Naive thymus-derived CD4-positive, alpha-beta T cell (primary cell): ENCODE measurements at regions of chr4 and their contacts with region 1.

Region 1: DNA sequence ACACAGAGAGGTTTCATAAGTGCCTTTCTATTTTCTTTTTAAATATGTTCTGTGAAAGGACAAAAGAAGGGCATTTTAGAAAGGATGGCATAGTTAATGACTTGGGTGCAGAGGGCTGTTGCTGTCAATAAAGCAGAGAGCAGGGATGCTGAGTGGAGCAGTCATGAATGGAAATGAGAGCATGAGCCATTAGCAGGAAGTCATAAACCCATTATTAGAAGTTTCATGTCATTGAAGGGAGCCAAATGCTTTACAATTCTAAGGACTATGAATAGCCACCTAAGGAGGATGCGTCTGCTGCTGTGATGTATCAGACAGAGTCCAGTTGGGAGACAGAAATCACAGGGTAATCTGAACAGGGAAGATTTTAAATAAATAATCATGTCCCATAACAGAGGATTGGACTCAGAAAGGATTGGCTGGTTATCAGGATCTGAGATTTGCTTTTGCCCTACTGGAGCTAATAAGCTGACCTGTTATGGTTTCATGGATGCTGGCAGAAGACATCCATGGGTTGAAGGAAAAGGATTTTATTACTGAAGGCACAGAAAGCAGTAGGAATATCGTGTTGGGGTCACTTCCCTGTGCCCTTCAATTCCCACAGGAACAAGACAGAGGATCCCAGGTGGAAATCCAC is 47.5 kb upstream of the WDR19 start:
- DNase-seq: peak in 1 of 9 donors; percentile 2
- ATAC-seq: no peak
- H3K4me3 ChIP-seq: no peak overlapping the region
- H3K4me3 Mint-ChIP-seq: no peak overlapping the region
- H3K27ac ChIP-seq: no peak overlapping the region
- H3K27ac Mint-ChIP-seq: peak overlapping the region in 1 of 9 donors; percentile 37
- H3K4me1 ChIP-seq: peaks cover 0 to 3% of the 10 kb centered on the region in 2 donors
- H3K4me1 Mint-ChIP-seq: peaks cover 1 to 18% (median 12%) of the 10 kb centered on the region in 7 donors
- H3K27me3 ChIP-seq: no peaks in the 10 kb centered on the region
- H3K27me3 Mint-ChIP-seq: no peaks in the 10 kb centered on the region

Region 2: GRCh38 chr4:38759113-38759789 is 375.6 kb before region 1 on chr4:
- CTCF ChIA-PET with region 1: interaction called, 22 read pairs
- POLR2A ChIA-PET with region 1: no interaction called
- intact Hi-C with region 1: loop called (anchors 1 kb)
- DNase-seq: peak; percentile 29 to 66 (median 58)
- ATAC-seq: peak; percentile 64
- H3K4me3 ChIP-seq: no peak overlapping the region
- H3K4me3 Mint-ChIP-seq: no peak overlapping the region
- H3K27ac ChIP-seq: no peak overlapping the region
- H3K27ac Mint-ChIP-seq: peak overlapping the region in 2 of 9 donors; percentile 10 to 41
- H3K4me1 ChIP-seq: peaks cover 0 to 5% of the 10 kb centered on the region in 2 donors
- H3K4me1 Mint-ChIP-seq: peaks cover 8 to 31% (median 19%) of the 10 kb centered on the region in 7 donors
- H3K27me3 ChIP-seq: no peaks in the 10 kb centered on the region
- H3K27me3 Mint-ChIP-seq: no peaks in the 10 kb centered on the region

Region 3: GRCh38 chr4:38980903-38981676 is 153.7 kb before region 1 on chr4:
- CTCF ChIA-PET with region 1: no interaction called
- POLR2A ChIA-PET with region 1: no interaction called
- intact Hi-C with region 1: loop called in 1 of 2 experiments (anchors 10 kb)
- DNase-seq: no peak
- ATAC-seq: no peak
- H3K4me3 ChIP-seq: no peak overlapping the region
- H3K4me3 Mint-ChIP-seq: peak overlapping the region in 1 of 10 donors; percentile 50
- H3K27ac ChIP-seq: no peak overlapping the region
- H3K27ac Mint-ChIP-seq: peak overlapping the region in 2 of 9 donors; percentile 28 to 65
- H3K4me1 ChIP-seq: no peaks in the 10 kb centered on the region
- H3K4me1 Mint-ChIP-seq: peaks cover 2 to 55% (median 5%) of the 10 kb centered on the region in 7 donors
- H3K27me3 ChIP-seq: no peaks in the 10 kb centered on the region
- H3K27me3 Mint-ChIP-seq: no peaks in the 10 kb centered on the region

Region 4: GRCh38 chr4:39118034-39118658 is 16.7 kb before region 1 on chr4:
- CTCF ChIA-PET with region 1: interaction called, 4 read pairs
- POLR2A ChIA-PET with region 1: interaction called, 3 read pairs
- intact Hi-C with region 1: loop called in 1 of 2 experiments (anchors 2 kb)
- DNase-seq: peak in 1 of 9 donors; percentile 27
- ATAC-seq: no peak
- H3K4me3 ChIP-seq: no peak overlapping the region
- H3K4me3 Mint-ChIP-seq: peak overlapping the region in 9 of 10 donors; percentile 5 to 64 (median 55)
- H3K27ac ChIP-seq: no peak overlapping the region
- H3K27ac Mint-ChIP-seq: peak overlapping the region in 8 of 9 donors; percentile 6 to 91 (median 73)
- H3K4me1 ChIP-seq: peaks cover 7 to 8% of the 10 kb centered on the region in 2 donors
- H3K4me1 Mint-ChIP-seq: peaks cover 13 to 38% (median 23%) of the 10 kb centered on the region in 7 donors
- H3K27me3 ChIP-seq: no peaks in the 10 kb centered on the region
- H3K27me3 Mint-ChIP-seq: no peaks in the 10 kb centered on the region